ENCODE measurements at regions of chr19 and their contacts with region 1.

Region 1: GRCh38 chr19:54339646-54340358 is 840 bp upstream of the LILRA4 start:
- DNase-seq: peak; percentile 82
- ATAC-seq: peak; percentile 80
- H3K4me3 ChIP-seq: peak overlapping the region in 1 of 5 experiments; percentile 25
- H3K4me3 Mint-ChIP-seq: peak overlapping the region; percentile 77
- H3K27ac ChIP-seq: peak overlapping the region; percentile 31 to 69
- H3K27ac Mint-ChIP-seq: peak overlapping the region; percentile 87
- H3K4me1 ChIP-seq: peaks cover 65 to 67% of the 10 kb centered on the region in 2 donors
- H3K4me1 Mint-ChIP-seq: peaks cover 78% of the 10 kb centered on the region
- H3K27me3 ChIP-seq: no peaks in the 10 kb centered on the region
- H3K27me3 Mint-ChIP-seq: no peaks in the 10 kb centered on the region
- CTCF ChIP-seq: no peak

Region 2: GRCh38 chr19:54352041-54352440 is 12.2 kb after region 1 on chr19:
- CTCF ChIA-PET with region 1: interaction called, 4 read pairs
- POLR2A ChIA-PET with region 1: no interaction called
- intact Hi-C with region 1: loop called (anchors 2 kb)
- DNase-seq: peak; percentile 61
- ATAC-seq: peak; percentile 79
- H3K4me3 ChIP-seq: peak overlapping the region in 1 of 5 experiments; percentile 2
- H3K4me3 Mint-ChIP-seq: peak overlapping the region; percentile 66
- H3K27ac ChIP-seq: peak overlapping the region; percentile 69 to 71
- H3K27ac Mint-ChIP-seq: peak overlapping the region; percentile 89
- H3K4me1 ChIP-seq: peaks cover 49 to 62% of the 10 kb centered on the region in 2 donors
- H3K4me1 Mint-ChIP-seq: peaks cover 55% of the 10 kb centered on the region
- H3K27me3 ChIP-seq: peaks cover 0 to 2% (median 0%) of the 10 kb centered on the region in 4 experiments
- H3K27me3 Mint-ChIP-seq: no peaks in the 10 kb centered on the region
- CTCF ChIP-seq: peak; percentile 30